ENCODE measurements at regions of chr13 and their contacts with region 1.

Region 1: DNA sequence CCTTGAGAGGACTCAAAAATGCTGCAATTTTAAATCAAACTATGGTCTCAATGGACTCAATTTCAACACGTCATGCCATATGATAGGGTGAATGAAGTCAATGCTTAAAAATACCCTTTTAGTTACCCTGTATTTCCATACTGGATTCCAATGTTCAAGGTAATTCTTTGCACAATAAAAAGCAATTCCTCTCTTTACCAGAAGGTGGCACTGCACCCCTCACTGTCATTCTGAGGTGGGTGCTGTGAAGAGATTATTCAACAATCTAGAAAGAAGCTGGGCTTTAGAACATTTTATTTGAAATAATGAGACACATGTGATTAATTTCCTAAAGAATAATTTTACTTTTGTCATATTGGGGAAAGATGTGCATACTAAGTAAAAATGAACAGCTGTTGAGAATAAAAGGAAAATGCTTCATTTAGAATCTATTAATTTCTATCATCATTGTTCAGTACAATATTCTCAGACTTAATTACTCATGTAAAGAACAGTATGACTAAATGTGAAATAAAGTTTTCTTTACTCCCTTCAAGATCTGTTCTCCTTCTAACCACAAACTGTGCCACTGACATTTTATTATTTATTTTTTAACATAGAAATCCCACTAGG is 789.1 kb downstream of the GPC5 start:
- DNase-seq: peak; percentile 11 to 28 (median 16)
- ATAC-seq: no peak
- H3K4me3 ChIP-seq: no peak overlapping the region
- H3K27ac ChIP-seq: no peak overlapping the region
- H3K4me1 ChIP-seq: no peaks in the 10 kb centered on the region
- H3K27me3 ChIP-seq: no peaks in the 10 kb centered on the region
- CTCF ChIP-seq: peak; percentile 15 to 52 (median 51); a peak in 4 of 6 replicates
- EP300 ChIP-seq: no peak
- POLR2A ChIP-seq: no peak
- RAD21 ChIP-seq: peak; percentile 52 to 62

Region 2: GRCh38 chr13:91863699-91864098 is 323.8 kb before region 1 on chr13:
- CTCF ChIA-PET with region 1: no interaction called
- POLR2A ChIA-PET with region 1: no interaction called
- in situ Hi-C with region 1: loop called (anchors 25 kb)
- intact Hi-C with region 1: no loop called
- DNase-seq: no peak
- ATAC-seq: no peak
- H3K4me3 ChIP-seq: no peak overlapping the region
- H3K27ac ChIP-seq: no peak overlapping the region
- H3K4me1 ChIP-seq: no peaks in the 10 kb centered on the region
- H3K27me3 ChIP-seq: no peaks in the 10 kb centered on the region
- CTCF ChIP-seq: no peak
- EP300 ChIP-seq: no peak
- POLR2A ChIP-seq: no peak
- RAD21 ChIP-seq: no peak

Region 3: GRCh38 chr13:92260363-92260762 is 72.9 kb after region 1 on chr13:
- CTCF ChIA-PET with region 1: no interaction called
- POLR2A ChIA-PET with region 1: no interaction called
- in situ Hi-C with region 1: no loop called
- intact Hi-C with region 1: no loop called
- DNase-seq: no peak
- ATAC-seq: no peak
- H3K4me3 ChIP-seq: no peak overlapping the region
- H3K27ac ChIP-seq: no peak overlapping the region
- H3K4me1 ChIP-seq: no peaks in the 10 kb centered on the region
- H3K27me3 ChIP-seq: no peaks in the 10 kb centered on the region
- CTCF ChIP-seq: no peak
- EP300 ChIP-seq: no peak
- POLR2A ChIP-seq: no peak
- RAD21 ChIP-seq: no peak